ENCODE measurements at regions of chr5 and their contacts with region 1.

Region 1: DNA sequence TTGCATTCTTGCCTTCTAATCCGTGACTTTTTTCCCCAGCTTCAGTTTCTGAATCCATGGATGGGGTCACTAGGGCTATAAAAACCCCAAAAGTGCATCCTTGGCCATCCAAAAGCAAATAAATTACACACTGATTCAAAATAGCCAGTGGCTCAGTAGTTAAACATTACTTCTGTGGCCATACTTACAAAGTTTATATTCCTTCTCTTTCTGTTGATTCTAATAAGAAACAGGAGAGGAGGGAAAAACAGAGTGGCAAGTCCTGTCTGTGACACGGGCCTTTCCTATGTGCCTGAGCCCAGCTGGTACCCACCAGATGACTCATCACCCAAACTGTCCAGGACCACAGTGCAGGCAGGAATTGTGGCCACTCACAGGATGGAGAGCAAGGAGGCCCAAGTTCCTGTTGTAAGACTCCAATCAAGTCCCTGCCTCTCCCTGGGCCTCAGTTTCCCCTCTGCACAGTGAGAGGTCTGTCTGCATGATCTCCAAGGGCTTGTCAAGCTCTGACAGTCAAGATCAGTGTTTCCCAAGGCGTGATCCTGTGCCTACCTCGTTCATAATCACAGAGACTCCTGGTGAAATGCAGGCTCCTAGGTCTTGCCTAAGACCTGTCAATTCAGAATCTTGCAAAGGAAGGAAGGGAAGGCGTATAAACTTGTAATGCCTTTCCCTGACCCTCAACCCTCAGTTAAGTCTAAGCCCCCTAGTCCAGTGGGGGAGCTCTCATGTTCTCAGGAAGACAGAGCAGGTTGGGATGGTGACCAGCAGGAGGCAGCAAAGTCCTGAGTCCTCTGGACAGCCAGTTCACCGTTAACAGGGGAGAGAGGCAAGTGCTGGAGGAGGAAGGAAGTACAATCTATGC is 29.5 kb downstream of the TNIP1 start:
- DNase-seq: peak; percentile 86
- ATAC-seq: peak; percentile 90
- H3K4me3 ChIP-seq: no peak overlapping the region
- H3K4me3 Mint-ChIP-seq: no peak overlapping the region
- H3K27ac ChIP-seq: no peak overlapping the region
- H3K27ac Mint-ChIP-seq: peak overlapping the region; percentile 66
- H3K4me1 ChIP-seq: peaks cover 15 to 22% of the 10 kb centered on the region in 2 donors
- H3K4me1 Mint-ChIP-seq: peaks cover 27% of the 10 kb centered on the region
- H3K27me3 ChIP-seq: no peaks in the 10 kb centered on the region
- H3K27me3 Mint-ChIP-seq: no peaks in the 10 kb centered on the region
- CTCF ChIP-seq: peak; percentile 84

Region 2: DNA sequence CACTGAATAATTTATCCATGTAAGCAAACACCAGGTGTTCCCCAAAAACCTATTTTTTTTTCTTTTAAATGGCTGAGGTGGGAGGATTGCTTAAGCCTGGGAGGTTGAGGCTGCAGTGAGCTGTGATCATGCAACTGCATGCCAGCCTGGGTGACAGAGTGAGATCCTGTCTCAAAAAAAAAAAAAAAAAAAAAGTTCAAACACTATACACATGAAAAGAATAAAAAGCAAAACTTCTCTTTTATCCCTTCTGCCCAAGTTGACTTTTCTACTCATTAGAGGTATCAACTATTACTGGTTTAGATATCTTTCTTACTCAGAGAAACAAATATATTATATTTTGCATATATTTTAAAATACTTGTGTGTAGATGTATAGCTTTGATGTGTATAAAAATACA is 310.3 kb before region 1 on chr5:
- CTCF ChIA-PET with region 1: no interaction called
- POLR2A ChIA-PET with region 1: no interaction called
- intact Hi-C with region 1: no loop called
- DNase-seq: no peak
- ATAC-seq: no peak
- H3K4me3 ChIP-seq: no peak overlapping the region
- H3K4me3 Mint-ChIP-seq: no peak overlapping the region
- H3K27ac ChIP-seq: no peak overlapping the region
- H3K27ac Mint-ChIP-seq: no peak overlapping the region
- H3K4me1 ChIP-seq: no peaks in the 10 kb centered on the region
- H3K4me1 Mint-ChIP-seq: peaks cover 27% of the 10 kb centered on the region
- H3K27me3 ChIP-seq: no peaks in the 10 kb centered on the region
- H3K27me3 Mint-ChIP-seq: no peaks in the 10 kb centered on the region
- CTCF ChIP-seq: no peak

Region 3: DNA sequence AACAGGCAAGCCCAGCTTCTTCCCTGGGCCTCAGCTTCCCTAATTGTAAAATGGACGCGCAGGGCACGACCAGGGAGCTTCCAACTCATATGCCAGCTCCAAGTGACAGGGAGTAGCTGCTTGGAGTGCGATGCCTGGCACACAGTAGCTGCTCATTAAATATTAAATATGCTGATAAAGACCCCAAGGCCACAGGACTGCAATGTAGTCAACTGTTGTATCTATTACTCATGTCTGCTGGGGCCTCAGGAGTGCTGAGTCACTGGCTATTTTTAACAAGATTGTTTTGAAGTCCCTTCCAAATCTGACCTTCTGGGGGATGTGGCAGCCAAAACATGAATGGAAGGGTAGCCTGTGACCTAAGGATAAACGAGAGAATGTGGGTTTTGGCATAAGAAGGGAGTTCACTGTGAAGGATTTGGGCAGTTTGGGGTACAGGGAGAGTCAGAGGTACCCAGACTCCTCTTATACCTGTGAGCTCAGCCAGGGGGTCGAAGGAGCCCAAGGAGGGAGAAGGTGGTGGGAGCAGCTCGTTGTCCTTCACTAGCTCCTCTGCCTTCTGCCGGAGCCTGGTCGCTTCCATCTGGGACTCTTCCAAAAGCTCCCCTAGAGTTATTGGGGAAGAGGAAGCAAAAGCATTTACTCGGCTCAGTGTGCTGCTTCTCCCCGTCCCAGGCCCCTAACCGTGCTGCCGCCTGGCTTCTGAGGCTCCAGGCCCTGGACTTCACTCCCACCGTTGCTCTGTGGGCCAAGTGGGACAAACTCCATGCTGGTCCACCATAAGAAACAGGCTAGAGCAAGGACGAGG is 12.0 kb after region 1 on chr5:
- CTCF ChIA-PET with region 1: interaction called, 20 read pairs
- POLR2A ChIA-PET with region 1: no interaction called
- intact Hi-C with region 1: no loop called
- DNase-seq: no peak
- ATAC-seq: no peak
- H3K4me3 ChIP-seq: no peak overlapping the region
- H3K4me3 Mint-ChIP-seq: no peak overlapping the region
- H3K27ac ChIP-seq: no peak overlapping the region
- H3K27ac Mint-ChIP-seq: peak overlapping the region; percentile 72
- H3K4me1 ChIP-seq: peaks cover 44 to 54% of the 10 kb centered on the region in 2 donors
- H3K4me1 Mint-ChIP-seq: peaks cover 69% of the 10 kb centered on the region
- H3K27me3 ChIP-seq: no peaks in the 10 kb centered on the region
- H3K27me3 Mint-ChIP-seq: no peaks in the 10 kb centered on the region
- CTCF ChIP-seq: no peak

Region 4: GRCh38 chr5:151094054-151094851 is 43.0 kb after region 1 on chr5:
- CTCF ChIA-PET with region 1: interaction called, 24 read pairs
- POLR2A ChIA-PET with region 1: interaction called, 4 read pairs
- intact Hi-C with region 1: no loop called
- DNase-seq: peak; percentile 79
- ATAC-seq: peak; percentile 76
- H3K4me3 ChIP-seq: peak overlapping the region in 2 of 5 experiments; percentile 2 to 22
- H3K4me3 Mint-ChIP-seq: peak overlapping the region; percentile 82
- H3K27ac ChIP-seq: peak overlapping the region; percentile 26 to 76
- H3K27ac Mint-ChIP-seq: peak overlapping the region; percentile 68
- H3K4me1 ChIP-seq: peaks cover 55 to 62% of the 10 kb centered on the region in 2 donors
- H3K4me1 Mint-ChIP-seq: peaks cover 68% of the 10 kb centered on the region
- H3K27me3 ChIP-seq: no peaks in the 10 kb centered on the region
- H3K27me3 Mint-ChIP-seq: no peaks in the 10 kb centered on the region
- CTCF ChIP-seq: no peak

Region 5: GRCh38 chr5:151126199-151126645 is 74.9 kb after region 1 on chr5:
- CTCF ChIA-PET with region 1: interaction called, 918 read pairs
- POLR2A ChIA-PET with region 1: interaction called, 3 read pairs
- intact Hi-C with region 1: no loop called
- DNase-seq: peak; percentile 80
- ATAC-seq: no peak
- H3K4me3 ChIP-seq: peak overlapping the region in 1 of 5 experiments; percentile 12
- H3K4me3 Mint-ChIP-seq: peak overlapping the region; percentile 88
- H3K27ac ChIP-seq: peak overlapping the region; percentile 87 to 91
- H3K27ac Mint-ChIP-seq: peak overlapping the region; percentile 91
- H3K4me1 ChIP-seq: peaks cover 50 to 74% of the 10 kb centered on the region in 2 donors
- H3K4me1 Mint-ChIP-seq: peaks cover 78% of the 10 kb centered on the region
- H3K27me3 ChIP-seq: no peaks in the 10 kb centered on the region
- H3K27me3 Mint-ChIP-seq: no peaks in the 10 kb centered on the region
- CTCF ChIP-seq: peak; percentile 78

Region 6: DNA sequence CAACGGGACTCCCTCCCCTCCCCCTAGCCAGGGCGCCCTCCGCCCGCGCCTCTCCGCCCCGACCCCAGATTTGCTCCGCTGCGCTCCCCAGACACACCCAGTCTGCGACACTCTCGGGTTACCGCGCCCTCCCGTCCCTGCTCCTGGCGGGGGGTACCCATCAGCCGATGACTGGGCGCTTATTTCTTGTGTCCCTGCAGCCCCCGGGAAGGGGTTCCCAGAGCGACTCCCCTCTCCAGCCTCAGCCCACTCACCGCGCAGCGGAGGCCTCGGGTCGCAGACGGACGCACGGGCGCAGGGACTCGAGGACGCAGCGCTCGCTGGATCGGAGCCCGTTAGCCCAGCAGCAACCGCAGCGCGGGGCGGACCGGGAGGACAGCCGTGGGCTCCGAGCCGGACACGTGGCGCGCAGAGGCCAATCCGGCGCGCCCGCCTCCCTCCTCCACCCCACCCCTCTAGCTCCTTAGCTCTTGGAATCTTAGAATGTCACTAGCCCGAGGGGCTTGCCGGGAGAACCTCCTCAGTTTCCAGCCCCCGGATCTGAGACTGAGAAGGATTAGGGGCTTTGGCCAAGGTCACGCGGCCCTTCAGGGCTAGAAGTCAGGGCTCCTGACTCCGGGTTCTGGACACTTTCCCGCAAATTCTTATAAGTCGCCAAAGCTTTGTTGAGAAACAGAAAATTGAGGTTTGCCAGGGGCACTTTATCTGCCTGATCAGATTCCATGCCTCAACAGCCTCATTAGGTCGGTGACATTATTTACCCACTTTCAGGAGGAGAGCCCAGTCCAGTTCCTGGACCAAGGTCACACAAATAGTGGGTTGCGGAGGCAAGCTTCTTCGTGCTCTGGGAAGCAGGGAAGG is 106.4 kb after region 1 on chr5 and contains the start of gene ANXA6:
- CTCF ChIA-PET with region 1: interaction called, 260 read pairs
- POLR2A ChIA-PET with region 1: no interaction called
- intact Hi-C with region 1: no loop called
- DNase-seq: peak; percentile 72
- ATAC-seq: peak; percentile 77
- H3K4me3 ChIP-seq: peak within 1 kb of the TSS; percentile 87 to 93 (median 89)
- H3K4me3 Mint-ChIP-seq: peak within 1 kb of the TSS; percentile 97
- H3K27ac ChIP-seq: peak within 1 kb of the TSS; percentile 76 to 91
- H3K27ac Mint-ChIP-seq: peak within 1 kb of the TSS; percentile 97
- H3K4me1 ChIP-seq: peaks cover 63 to 74% of the 10 kb centered on the region in 2 donors
- H3K4me1 Mint-ChIP-seq: peaks cover 73% of the 10 kb centered on the region
- H3K27me3 ChIP-seq: no peaks in the 10 kb centered on the region
- H3K27me3 Mint-ChIP-seq: no peaks in the 10 kb centered on the region
- CTCF ChIP-seq: no peak
- total RNA-seq, gene ANXA6: 300 and 316 TPM in 2 replicates

Region 7: GRCh38 chr5:151298063-151298855 is 247.0 kb after region 1 on chr5:
- CTCF ChIA-PET with region 1: interaction called, 4 read pairs
- POLR2A ChIA-PET with region 1: no interaction called
- intact Hi-C with region 1: loop called (anchors 5 kb)
- DNase-seq: peak; percentile 56
- ATAC-seq: peak; percentile 51
- H3K4me3 ChIP-seq: no peak overlapping the region
- H3K4me3 Mint-ChIP-seq: no peak overlapping the region
- H3K27ac ChIP-seq: no peak overlapping the region
- H3K27ac Mint-ChIP-seq: no peak overlapping the region
- H3K4me1 ChIP-seq: no peaks in the 10 kb centered on the region
- H3K4me1 Mint-ChIP-seq: peaks cover 2% of the 10 kb centered on the region
- H3K27me3 ChIP-seq: no peaks in the 10 kb centered on the region
- H3K27me3 Mint-ChIP-seq: peaks cover 32% of the 10 kb centered on the region
- CTCF ChIP-seq: peak; percentile 47